HEK293 (cell line): ENCODE measurements at regions of chr1 and their contacts with region 1.

Region 1: GRCh38 chr1:168637350-168637991 is 61.1 kb downstream of the XCL1 start:
- H3K4me3 ChIP-seq: no peak overlapping the region
- H3K27ac ChIP-seq: no peak overlapping the region
- H3K4me1 ChIP-seq: no peaks in the 10 kb centered on the region
- CTCF ChIP-seq: peak; percentile 52

Region 2: DNA sequence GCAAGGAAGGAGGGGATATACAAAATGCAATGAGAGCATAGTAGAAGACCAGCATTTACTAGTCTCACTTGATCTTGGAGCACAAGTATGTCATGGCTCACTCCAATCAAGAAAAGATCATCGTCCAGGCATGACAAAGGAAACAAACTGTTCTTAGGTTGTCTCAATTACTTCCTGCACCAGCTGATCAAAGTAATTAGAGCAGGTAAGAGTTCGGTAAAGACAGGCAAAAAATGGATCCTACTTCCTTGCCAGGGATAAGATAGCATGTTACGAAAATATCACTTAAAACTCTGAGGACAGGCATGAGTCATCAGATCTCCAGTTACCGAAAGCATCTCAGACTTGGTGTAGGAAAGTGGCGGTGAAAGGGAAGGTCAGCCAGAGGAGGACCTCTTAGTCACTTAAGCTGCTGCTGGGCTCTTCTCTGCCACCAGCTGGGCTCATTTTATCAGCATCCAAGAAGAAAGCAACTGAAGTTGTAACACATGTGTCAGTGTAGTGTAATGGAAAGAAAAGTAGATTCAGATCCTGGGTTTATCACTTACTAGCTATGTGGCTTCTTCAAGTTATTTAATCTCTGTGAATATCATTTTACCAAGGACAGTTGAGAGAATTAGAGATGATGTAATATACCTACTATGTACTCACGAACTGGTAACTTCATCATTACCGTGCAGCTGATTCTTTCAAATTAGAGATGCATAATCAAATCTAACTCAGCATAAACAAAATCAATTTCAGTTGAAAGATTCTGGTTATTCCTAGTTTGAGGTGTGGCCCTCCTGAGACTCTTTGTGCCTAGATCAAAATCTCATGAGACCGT is 14.3 kb before region 1 on chr1:
- CTCF ChIA-PET with region 1: interaction called, 17 read pairs
- POLR2A ChIA-PET with region 1: no interaction called
- H3K4me3 ChIP-seq: no peak overlapping the region
- H3K27ac ChIP-seq: no peak overlapping the region
- H3K4me1 ChIP-seq: no peaks in the 10 kb centered on the region; the same call in 1 of the 2 replicates
- CTCF ChIP-seq: no peak

Region 3: GRCh38 chr1:168653567-168653966 is 16.1 kb after region 1 on chr1:
- CTCF ChIA-PET with region 1: interaction called, 24 read pairs
- POLR2A ChIA-PET with region 1: no interaction called
- H3K4me3 ChIP-seq: no peak overlapping the region
- H3K27ac ChIP-seq: no peak overlapping the region
- H3K4me1 ChIP-seq: no peaks in the 10 kb centered on the region; the same call in 1 of the 2 replicates
- CTCF ChIP-seq: no peak

Region 4: GRCh38 chr1:169348383-169349036 is 711.0 kb after region 1 on chr1:
- CTCF ChIA-PET with region 1: interaction called, 13 read pairs
- POLR2A ChIA-PET with region 1: no interaction called
- H3K4me3 ChIP-seq: no peak overlapping the region
- H3K27ac ChIP-seq: no peak overlapping the region
- H3K4me1 ChIP-seq: no peaks in the 10 kb centered on the region
- CTCF ChIP-seq: peak; percentile 51; the same call in 1 of the 2 replicates